A549 (cell line): ENCODE measurements at regions of chr11 and their contacts with region 1.

Region 1: DNA sequence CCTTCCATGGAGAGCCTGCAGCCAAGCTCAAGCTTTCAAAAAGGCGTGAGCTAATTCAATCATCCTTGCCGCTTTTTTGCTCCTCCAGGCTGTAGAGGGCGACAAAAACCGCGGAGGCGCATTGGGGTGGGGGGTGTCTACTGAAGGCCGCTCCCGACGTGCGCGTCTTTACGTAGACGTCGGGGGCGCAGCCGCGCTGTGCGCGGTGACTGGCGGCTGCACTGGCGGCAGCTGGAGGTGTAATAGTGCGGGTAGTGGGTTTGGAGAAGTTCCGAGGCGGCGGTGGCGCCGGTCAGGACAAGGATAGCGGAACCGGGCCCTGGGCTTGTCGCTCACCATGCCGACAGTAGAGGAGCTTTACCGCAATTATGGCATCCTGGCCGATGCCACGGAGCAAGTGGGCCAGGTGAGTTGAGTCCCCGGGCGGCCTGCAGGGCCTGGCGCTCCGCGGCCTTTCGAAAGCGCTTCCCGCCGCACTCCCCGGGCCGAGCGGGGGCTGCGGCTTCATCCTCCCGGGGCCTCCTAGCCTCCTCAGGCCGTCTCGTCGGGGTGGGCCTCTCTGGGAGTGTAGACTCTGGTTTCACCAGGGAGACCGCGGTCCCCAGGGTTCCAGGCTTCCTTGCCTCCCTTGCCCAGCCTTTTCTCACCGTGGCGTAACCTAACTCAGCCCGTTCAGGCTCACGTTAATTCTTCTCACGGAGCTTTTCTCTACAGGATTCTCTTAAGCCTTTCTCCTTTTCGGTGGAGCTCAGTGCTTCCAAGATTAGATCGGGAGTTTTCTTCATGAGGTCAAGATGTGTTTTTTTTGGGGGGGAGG is at the start of gene API5:
- DNase-seq: peak; percentile 64 to 96
- ATAC-seq: peak; percentile 99
- H3K4me3 ChIP-seq: peak within 1 kb of the TSS; percentile 93
- H3K27ac ChIP-seq: peak within 1 kb of the TSS; percentile 84 to 93
- H3K4me1 ChIP-seq: peaks cover 14% of the 10 kb centered on the region; the same call in 2 of the 3 replicates
- CTCF ChIP-seq: peak; percentile 76
- EP300 ChIP-seq: no peak
- POLR2A ChIP-seq: peak; percentile 60
- RAD21 ChIP-seq: peak in 1 of 2 experiments; percentile 18; a peak in 1 of 5 replicates
- polyA plus RNA-seq, gene API5: 89.8 and 127 TPM in 2 replicates

Region 2: DNA sequence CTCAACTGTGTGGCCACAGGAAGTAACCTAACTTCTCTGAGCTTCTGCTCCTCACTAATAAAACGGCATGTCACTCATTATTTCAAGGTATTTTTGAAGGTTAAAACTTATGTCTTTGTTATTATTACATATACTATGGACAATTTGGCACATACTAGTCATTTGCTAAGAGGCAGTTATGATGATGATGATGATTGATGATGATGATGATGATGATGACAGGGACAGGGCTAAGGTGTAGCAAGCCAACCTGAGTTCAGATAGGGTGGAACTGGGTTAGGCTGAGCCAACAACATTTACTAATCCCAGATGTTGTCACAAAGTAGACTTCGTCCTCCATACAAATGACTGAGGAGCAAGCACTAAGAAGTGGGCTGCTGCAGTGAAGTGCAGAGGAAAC is 40.2 kb before region 1 on chr11:
- CTCF ChIA-PET with region 1: no interaction called
- POLR2A ChIA-PET with region 1: no interaction called
- DNase-seq: no peak
- ATAC-seq: no peak
- H3K4me3 ChIP-seq: no peak overlapping the region
- H3K27ac ChIP-seq: no peak overlapping the region
- H3K4me1 ChIP-seq: no peaks in the 10 kb centered on the region
- CTCF ChIP-seq: no peak
- EP300 ChIP-seq: no peak
- POLR2A ChIP-seq: no peak
- RAD21 ChIP-seq: no peak

Region 3: GRCh38 chr11:43282607-43283440 is 29.2 kb before region 1 on chr11:
- CTCF ChIA-PET with region 1: interaction called, 11 read pairs
- POLR2A ChIA-PET with region 1: no interaction called
- DNase-seq: peak; percentile 25 to 40
- ATAC-seq: peak; percentile 62 to 80; a peak in 4 of 6 replicates
- H3K4me3 ChIP-seq: no peak overlapping the region
- H3K27ac ChIP-seq: no peak overlapping the region
- H3K4me1 ChIP-seq: no peaks in the 10 kb centered on the region
- CTCF ChIP-seq: peak; percentile 83
- EP300 ChIP-seq: no peak
- POLR2A ChIP-seq: no peak
- RAD21 ChIP-seq: peak; percentile 75 to 80

Region 4: DNA sequence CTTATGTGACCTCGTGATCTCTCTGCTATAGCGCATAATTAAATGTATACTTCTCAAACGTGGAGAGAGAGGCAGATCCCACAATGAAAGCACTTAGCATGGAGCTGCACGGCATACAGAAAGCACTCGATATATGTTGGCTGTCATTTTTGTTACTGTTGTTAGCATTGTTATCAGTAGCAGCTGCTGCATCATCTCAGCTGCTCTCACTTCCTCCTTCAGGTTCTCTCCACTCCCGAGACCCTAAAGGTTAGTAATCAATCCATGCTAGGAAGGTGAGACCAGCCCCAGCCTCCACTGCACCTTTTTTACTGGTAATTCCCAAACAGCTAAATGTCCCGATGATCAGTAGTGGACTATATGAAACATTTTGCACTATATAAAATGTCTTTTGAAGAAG is 13.6 kb before region 1 on chr11:
- CTCF ChIA-PET with region 1: interaction called, 19 read pairs
- POLR2A ChIA-PET with region 1: interaction called, 3 read pairs
- DNase-seq: no peak
- ATAC-seq: no peak
- H3K4me3 ChIP-seq: no peak overlapping the region
- H3K27ac ChIP-seq: no peak overlapping the region
- H3K4me1 ChIP-seq: no peaks in the 10 kb centered on the region
- CTCF ChIP-seq: no peak
- EP300 ChIP-seq: no peak
- POLR2A ChIP-seq: no peak
- RAD21 ChIP-seq: no peak

Region 5: DNA sequence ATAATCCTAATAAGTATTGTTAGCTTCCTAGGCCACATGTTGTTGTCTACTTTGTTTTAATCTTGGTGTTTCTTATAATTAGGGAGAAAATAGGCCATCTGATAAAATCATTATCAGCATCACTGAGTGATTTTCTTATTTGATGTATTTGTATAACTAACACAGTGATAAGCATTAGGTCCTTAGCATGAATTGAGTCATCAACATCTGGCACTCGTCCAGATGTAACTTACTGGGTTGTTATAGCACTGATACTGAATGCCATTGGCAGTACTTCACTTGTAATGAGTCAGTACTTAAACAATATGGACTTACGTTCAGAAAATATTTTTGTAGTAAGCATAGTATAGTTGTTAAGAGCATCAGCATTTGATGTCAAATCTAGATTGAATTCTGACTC is 16.0 kb after region 1 on chr11:
- CTCF ChIA-PET with region 1: interaction called, 10 read pairs
- POLR2A ChIA-PET with region 1: interaction called, 4 read pairs
- DNase-seq: peak in 1 of 2 experiments; percentile 54
- ATAC-seq: peak in 1 of 2 experiments; percentile 63; a peak in 3 of 6 replicates
- H3K4me3 ChIP-seq: no peak overlapping the region
- H3K27ac ChIP-seq: no peak overlapping the region
- H3K4me1 ChIP-seq: peaks cover 9% of the 10 kb centered on the region; the same call in 2 of the 3 replicates
- CTCF ChIP-seq: no peak
- EP300 ChIP-seq: no peak
- POLR2A ChIP-seq: no peak
- RAD21 ChIP-seq: no peak

Region 6: GRCh38 chr11:43358801-43359421 is 46.9 kb after region 1 on chr11 and contains the start of gene TTC17:
- CTCF ChIA-PET with region 1: interaction called, 6 read pairs
- POLR2A ChIA-PET with region 1: interaction called, 17 read pairs
- DNase-seq: peak; percentile 84 to 93
- ATAC-seq: peak; percentile 98 to 99
- H3K4me3 ChIP-seq: peak within 1 kb of the TSS; percentile 66
- H3K27ac ChIP-seq: peak within 1 kb of the TSS; percentile 92 to 98
- H3K4me1 ChIP-seq: peaks cover 10% of the 10 kb centered on the region
- CTCF ChIP-seq: no peak
- EP300 ChIP-seq: no peak
- POLR2A ChIP-seq: peak; percentile 95
- RAD21 ChIP-seq: no peak
- polyA plus RNA-seq, gene TTC17: 87.9 and 89.4 TPM in 2 replicates